ENCODE measurements at regions of chr9 and their contacts with region 1.

Region 1: GRCh38 chr9:72315510-72316311 is 49.3 kb downstream of the ZFAND5 start:
- DNase-seq: peak; percentile 82
- H3K4me3 ChIP-seq: peak overlapping the region in 2 of 4 donors; percentile 26 to 30
- H3K27ac ChIP-seq: peak overlapping the region; percentile 74 to 85 (median 78)
- H3K4me1 ChIP-seq: peaks cover 0 to 48% (median 37%) of the 10 kb centered on the region in 4 donors
- H3K27me3 ChIP-seq: no peaks in the 10 kb centered on the region
- CTCF ChIP-seq: no peak
- EP300 ChIP-seq: peak in 1 of 4 donors; percentile 38
- POLR2A ChIP-seq: no peak

Region 2: GRCh38 chr9:72173081-72173480 is 142.6 kb before region 1 on chr9:
- intact Hi-C with region 1: no loop called
- DNase-seq: no peak
- H3K4me3 ChIP-seq: no peak overlapping the region
- H3K27ac ChIP-seq: no peak overlapping the region
- H3K4me1 ChIP-seq: no peaks in the 10 kb centered on the region
- H3K27me3 ChIP-seq: no peaks in the 10 kb centered on the region
- CTCF ChIP-seq: no peak
- EP300 ChIP-seq: no peak
- POLR2A ChIP-seq: no peak

Region 3: DNA sequence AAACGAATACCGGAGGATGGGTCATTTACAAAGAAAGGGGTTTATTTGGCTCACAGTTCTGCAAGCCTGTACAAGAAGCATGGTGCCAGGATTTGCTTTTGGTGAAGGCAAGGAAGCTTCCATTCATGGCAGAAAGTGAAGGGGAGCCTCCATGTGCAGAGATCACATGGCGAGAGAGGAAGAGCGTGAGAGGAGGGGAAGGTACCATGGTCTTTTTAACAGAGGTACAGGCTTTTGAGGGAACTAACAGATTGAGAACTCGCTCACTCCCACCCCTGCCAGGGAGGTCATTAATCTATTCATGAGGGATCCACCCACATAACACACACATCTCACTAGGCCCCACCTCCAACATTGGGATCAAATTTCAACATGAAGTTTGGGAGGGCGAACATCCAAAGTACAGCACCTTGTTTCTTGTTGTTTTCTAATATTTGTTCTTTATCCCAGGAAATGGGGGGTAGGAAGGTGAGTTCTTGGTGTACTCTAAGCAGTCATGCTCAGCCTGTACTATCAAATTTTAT is 224.2 kb after region 1 on chr9:
- intact Hi-C with region 1: loop called (anchors 10 kb)
- DNase-seq: no peak
- H3K4me3 ChIP-seq: no peak overlapping the region
- H3K27ac ChIP-seq: no peak overlapping the region
- H3K4me1 ChIP-seq: no peaks in the 10 kb centered on the region
- H3K27me3 ChIP-seq: no peaks in the 10 kb centered on the region
- CTCF ChIP-seq: no peak
- EP300 ChIP-seq: no peak
- POLR2A ChIP-seq: no peak

Measured in sigmoid colon (tissue), 7 donors.